ENCODE measurements at regions of chr14 and their contacts with region 1.

Region 1: DNA sequence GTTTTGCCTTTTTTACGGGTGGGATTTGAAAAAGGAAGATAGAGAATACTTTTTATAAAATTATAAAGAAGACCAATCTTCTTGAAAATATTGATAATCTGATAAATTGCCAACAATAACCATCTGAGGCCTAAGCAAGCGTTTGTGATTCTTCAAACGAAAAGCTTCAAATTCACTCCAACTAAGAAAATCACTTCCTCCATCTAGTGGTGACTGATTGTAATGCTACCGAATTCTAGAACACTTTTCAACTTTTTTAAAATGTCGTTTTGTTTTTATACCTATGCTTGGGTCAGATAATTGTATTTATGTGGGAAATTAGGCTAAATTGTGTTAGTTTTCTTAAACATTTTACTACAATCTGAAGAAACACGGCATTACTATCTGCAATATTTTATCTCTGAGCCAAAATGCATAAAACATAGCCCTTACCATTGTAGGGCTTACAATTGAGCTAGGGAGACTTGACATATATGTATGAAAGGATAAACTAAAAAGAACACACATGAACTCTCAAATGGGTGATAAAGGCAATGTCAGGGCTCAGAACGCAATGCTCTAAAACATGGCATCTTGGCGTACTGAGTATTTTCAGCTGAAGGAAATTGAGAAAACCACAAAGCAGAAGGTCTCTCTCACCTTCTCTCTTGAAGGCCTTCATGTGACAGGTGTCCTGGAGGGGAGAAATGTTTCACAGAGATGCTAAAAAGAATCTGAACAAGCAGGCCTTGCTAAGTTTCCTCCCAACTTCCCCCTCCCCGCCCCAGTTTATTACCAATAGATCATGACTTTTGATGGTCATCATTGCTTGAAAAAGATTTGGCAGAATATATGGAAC is 36.8 kb upstream of the G2E3 start:
- DNase-seq: no peak
- H3K4me3 Mint-ChIP-seq: no peak overlapping the region
- H3K27ac Mint-ChIP-seq: no peak overlapping the region
- H3K4me1 Mint-ChIP-seq: peaks cover 4% of the 10 kb centered on the region
- H3K27me3 Mint-ChIP-seq: no peaks in the 10 kb centered on the region

Region 2: DNA sequence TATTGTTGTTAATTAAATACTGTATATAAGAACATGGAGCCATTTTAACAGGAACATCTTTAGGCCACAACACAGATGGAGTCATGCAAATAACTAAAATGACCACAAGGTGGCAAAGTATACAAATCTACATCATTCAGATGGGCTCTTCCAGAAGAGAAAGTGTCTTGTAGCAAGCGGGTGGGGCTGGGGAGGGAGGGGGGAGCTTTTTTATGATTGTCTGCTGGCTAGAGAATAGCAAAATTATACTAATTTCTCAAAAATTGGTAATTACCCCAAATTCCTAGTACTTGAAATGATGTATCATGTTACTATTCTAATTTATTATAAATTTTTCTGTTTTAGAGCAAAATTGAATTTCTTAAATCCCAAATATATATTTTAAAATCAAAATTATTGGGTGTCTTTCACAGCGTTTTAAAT is 973.2 kb before region 1 on chr14:
- CTCF ChIA-PET with region 1: no interaction called
- intact Hi-C with region 1: loop called (anchors 2 kb)
- DNase-seq: no peak
- H3K4me3 Mint-ChIP-seq: no peak overlapping the region
- H3K27ac Mint-ChIP-seq: no peak overlapping the region
- H3K4me1 Mint-ChIP-seq: no peaks in the 10 kb centered on the region
- H3K27me3 Mint-ChIP-seq: no peaks in the 10 kb centered on the region

Region 3: GRCh38 chr14:30410986-30411385 is 111.1 kb before region 1 on chr14:
- CTCF ChIA-PET with region 1: no interaction called
- intact Hi-C with region 1: no loop called
- DNase-seq: no peak
- H3K4me3 Mint-ChIP-seq: no peak overlapping the region
- H3K27ac Mint-ChIP-seq: no peak overlapping the region
- H3K4me1 Mint-ChIP-seq: no peaks in the 10 kb centered on the region
- H3K27me3 Mint-ChIP-seq: peaks cover 4% of the 10 kb centered on the region

Region 4: GRCh38 chr14:30532264-30532663 is 10.1 kb after region 1 on chr14:
- CTCF ChIA-PET with region 1: interaction called, 14 read pairs
- intact Hi-C with region 1: no loop called
- DNase-seq: no peak
- H3K4me3 Mint-ChIP-seq: no peak overlapping the region
- H3K27ac Mint-ChIP-seq: no peak overlapping the region
- H3K4me1 Mint-ChIP-seq: no peaks in the 10 kb centered on the region
- H3K27me3 Mint-ChIP-seq: peaks cover 2% of the 10 kb centered on the region

Region 5: DNA sequence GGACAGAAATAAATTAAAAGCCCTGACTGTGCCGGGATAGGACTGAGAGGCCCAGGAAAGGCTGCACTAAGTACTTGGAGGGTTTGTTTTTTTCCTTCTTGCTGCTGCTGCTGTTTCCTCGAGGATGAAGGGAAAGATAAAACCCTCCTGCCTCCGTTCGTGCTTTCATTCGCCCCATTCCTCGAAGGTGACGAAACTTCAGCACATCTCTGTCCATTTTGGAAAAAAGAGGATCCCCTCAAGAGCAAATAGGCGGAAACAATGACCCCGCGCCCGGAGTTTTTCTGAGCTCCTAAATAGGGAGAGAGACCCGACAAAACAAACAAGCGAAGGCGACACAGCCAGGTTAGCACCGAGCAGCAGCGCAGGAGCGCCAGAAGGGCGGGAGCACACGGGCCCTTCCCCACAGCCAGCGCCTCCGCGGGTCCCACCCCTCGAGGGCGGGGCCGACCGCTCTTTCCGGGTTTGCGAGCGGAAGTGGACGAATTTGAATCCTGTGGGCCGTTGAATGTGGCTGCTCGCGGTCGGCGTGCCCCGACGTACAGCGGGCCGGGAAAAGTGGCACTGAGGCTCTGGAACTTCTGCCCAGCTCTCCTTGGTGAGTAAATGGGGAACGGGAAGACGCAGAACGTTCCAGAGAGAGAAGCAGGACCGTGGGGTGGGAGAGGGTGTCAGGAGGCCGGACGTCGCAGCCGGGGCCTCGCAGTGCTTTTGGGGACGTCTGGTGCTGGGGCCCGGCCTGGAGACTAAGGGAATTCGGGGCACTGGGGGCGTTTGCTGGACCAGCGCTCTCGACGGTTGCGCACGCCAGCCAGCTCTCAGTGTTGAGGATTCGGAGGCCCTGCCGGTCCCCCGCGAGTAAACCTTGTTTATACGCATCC is 36.8 kb after region 1 on chr14 and contains the start of gene G2E3:
- CTCF ChIA-PET with region 1: no interaction called
- intact Hi-C with region 1: loop called (anchors 2 kb)
- DNase-seq: peak; percentile 92
- H3K4me3 Mint-ChIP-seq: peak within 1 kb of the TSS; percentile 100
- H3K27ac Mint-ChIP-seq: peak within 1 kb of the TSS; percentile 99
- H3K4me1 Mint-ChIP-seq: peaks cover 30% of the 10 kb centered on the region
- H3K27me3 Mint-ChIP-seq: no peaks in the 10 kb centered on the region
- total RNA-seq, gene G2E3: 28.6 to 29.1 TPM

Measured in activated naive CD4-positive, alpha-beta T cell treated with anti-CD3 and anti-CD28 coated beads for 36 hours (primary cell).